A549 (cell line): ENCODE measurements at regions of chr17 and their contacts with region 1.

Region 1: DNA sequence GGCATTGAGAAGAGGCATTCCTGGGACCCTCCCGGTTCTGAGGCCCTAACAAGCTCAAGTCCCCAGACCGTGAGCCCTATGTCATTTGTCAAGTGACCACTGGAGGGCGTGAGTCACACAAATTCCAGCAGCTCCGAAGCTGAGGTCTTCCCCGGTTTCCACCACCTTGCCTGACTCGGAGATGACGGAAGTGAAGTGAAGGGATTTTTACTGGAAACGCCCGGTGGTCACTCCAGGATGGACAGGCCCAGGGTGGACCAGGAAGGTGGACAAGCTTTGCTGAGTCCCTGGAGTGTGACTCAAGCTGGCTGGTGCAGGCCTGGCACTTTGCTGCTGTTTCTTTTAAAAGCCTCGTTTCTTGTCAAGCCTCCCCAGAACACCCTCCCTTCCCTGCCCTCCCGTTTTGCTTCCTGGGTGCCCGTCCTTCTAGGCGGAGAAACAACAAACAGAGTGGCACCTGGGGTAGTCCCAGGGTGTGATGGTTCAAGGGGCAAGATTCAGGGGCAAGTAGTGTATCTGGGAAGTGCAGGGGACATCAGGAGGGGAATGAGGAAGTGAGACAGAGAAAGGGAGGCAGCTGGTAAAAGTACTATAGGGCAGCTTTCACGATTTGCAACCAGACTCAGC is 5.3 kb upstream of the NOS2 start:
- DNase-seq: peak; percentile 92 to 93
- ATAC-seq: peak; percentile 95 to 99
- H3K4me3 ChIP-seq: peak overlapping the region; percentile 28
- H3K27ac ChIP-seq: peak overlapping the region; percentile 73 to 86
- H3K4me1 ChIP-seq: peaks cover 3% of the 10 kb centered on the region; the same call in 1 of the 3 replicates
- CTCF ChIP-seq: peak; percentile 86
- EP300 ChIP-seq: no peak
- POLR2A ChIP-seq: no peak
- RAD21 ChIP-seq: peak; percentile 80 to 84

Region 2: GRCh38 chr17:27778193-27778592 is 27.4 kb before region 1 on chr17:
- CTCF ChIA-PET with region 1: interaction called, 24 read pairs
- POLR2A ChIA-PET with region 1: no interaction called
- DNase-seq: no peak
- ATAC-seq: no peak; a peak in 1 of 6 replicates
- H3K4me3 ChIP-seq: no peak overlapping the region
- H3K27ac ChIP-seq: peak overlapping the region; percentile 48 to 59
- H3K4me1 ChIP-seq: peaks cover 12% of the 10 kb centered on the region
- CTCF ChIP-seq: no peak
- EP300 ChIP-seq: no peak
- POLR2A ChIP-seq: no peak
- RAD21 ChIP-seq: no peak

Region 3: GRCh38 chr17:27793168-27793905 is 12.3 kb before region 1 on chr17:
- CTCF ChIA-PET with region 1: interaction called, 58 read pairs
- POLR2A ChIA-PET with region 1: no interaction called
- DNase-seq: peak in 1 of 2 experiments; percentile 37
- ATAC-seq: peak; percentile 69 to 85
- H3K4me3 ChIP-seq: peak overlapping the region; percentile 53
- H3K27ac ChIP-seq: peak overlapping the region; percentile 32 to 73; a peak in 5 of 6 replicates
- H3K4me1 ChIP-seq: peaks cover 10% of the 10 kb centered on the region; the same call in 2 of the 3 replicates
- CTCF ChIP-seq: no peak
- EP300 ChIP-seq: no peak
- POLR2A ChIP-seq: peak; percentile 31; the same call in 1 of the 2 replicates
- RAD21 ChIP-seq: no peak

Region 4: DNA sequence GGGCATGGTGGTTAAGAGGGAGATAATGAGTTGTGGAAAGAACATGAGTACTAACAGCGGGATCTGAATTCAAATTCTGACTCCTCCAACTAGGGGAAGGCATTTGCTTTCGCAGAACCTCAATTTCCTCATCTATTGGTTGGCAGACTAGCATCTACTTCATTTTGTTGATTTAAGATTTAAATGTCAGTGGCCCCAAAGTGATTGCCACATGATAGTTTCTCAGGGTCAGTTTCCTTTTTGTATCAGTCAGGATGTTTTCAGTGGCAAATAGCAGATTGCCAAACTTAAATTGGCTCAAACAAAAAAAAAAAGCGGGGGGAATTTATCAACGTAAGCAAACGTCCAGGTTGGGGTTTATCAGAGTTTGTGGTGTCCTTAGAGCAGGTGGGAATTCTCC is 19.8 kb after region 1 on chr17:
- CTCF ChIA-PET with region 1: interaction called, 42 read pairs
- POLR2A ChIA-PET with region 1: no interaction called
- DNase-seq: no peak
- ATAC-seq: no peak
- H3K4me3 ChIP-seq: no peak overlapping the region
- H3K27ac ChIP-seq: no peak overlapping the region
- H3K4me1 ChIP-seq: no peaks in the 10 kb centered on the region
- CTCF ChIP-seq: no peak
- EP300 ChIP-seq: no peak
- POLR2A ChIP-seq: no peak
- RAD21 ChIP-seq: no peak

Region 5: GRCh38 chr17:27846042-27846655 is 40.5 kb after region 1 on chr17:
- CTCF ChIA-PET with region 1: interaction called, 18 read pairs
- POLR2A ChIA-PET with region 1: no interaction called
- DNase-seq: no peak
- ATAC-seq: no peak
- H3K4me3 ChIP-seq: no peak overlapping the region
- H3K27ac ChIP-seq: no peak overlapping the region
- H3K4me1 ChIP-seq: no peaks in the 10 kb centered on the region
- CTCF ChIP-seq: no peak
- EP300 ChIP-seq: no peak
- POLR2A ChIP-seq: no peak
- RAD21 ChIP-seq: no peak

Region 6: GRCh38 chr17:27892866-27893769 is 87.5 kb after region 1 on chr17 and contains the start of gene LYRM9:
- CTCF ChIA-PET with region 1: interaction called, 474 read pairs
- POLR2A ChIA-PET with region 1: no interaction called
- DNase-seq: peak; percentile 78 to 90
- ATAC-seq: peak; percentile 95 to 99
- H3K4me3 ChIP-seq: peak within 1 kb of the TSS; percentile 48
- H3K27ac ChIP-seq: peak within 1 kb of the TSS; percentile 78 to 94
- H3K4me1 ChIP-seq: peaks cover 20% of the 10 kb centered on the region; the same call in 1 of the 3 replicates
- CTCF ChIP-seq: peak; percentile 99
- EP300 ChIP-seq: no peak
- POLR2A ChIP-seq: peak; percentile 89
- RAD21 ChIP-seq: peak; percentile 31 to 62; a peak in 3 of 5 replicates
- polyA plus RNA-seq, gene LYRM9: 2.5 and 2.7 TPM in 2 replicates

Region 7: DNA sequence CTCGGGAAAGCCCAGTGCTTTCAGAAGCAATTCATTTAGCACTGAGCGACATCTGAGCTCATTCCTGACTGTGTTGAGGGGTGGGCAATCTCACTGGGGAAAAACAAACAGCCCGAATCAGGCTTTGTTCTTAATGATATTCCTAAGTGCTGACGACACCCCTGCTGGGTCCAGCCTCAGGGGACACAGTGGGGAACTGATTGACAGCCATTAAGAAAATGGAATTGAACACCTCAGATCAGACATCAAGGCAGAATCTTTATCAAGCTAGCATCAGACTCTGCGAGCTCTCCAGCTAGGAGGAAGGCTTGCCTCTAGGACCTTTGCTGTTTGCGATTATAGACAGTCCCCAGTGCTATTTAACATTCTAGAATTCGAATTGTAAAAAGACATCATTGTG is 110.1 kb after region 1 on chr17:
- CTCF ChIA-PET with region 1: no interaction called
- POLR2A ChIA-PET with region 1: no interaction called
- DNase-seq: no peak
- ATAC-seq: no peak
- H3K4me3 ChIP-seq: no peak overlapping the region
- H3K27ac ChIP-seq: no peak overlapping the region
- H3K4me1 ChIP-seq: no peaks in the 10 kb centered on the region
- CTCF ChIP-seq: no peak
- EP300 ChIP-seq: no peak
- POLR2A ChIP-seq: no peak
- RAD21 ChIP-seq: no peak

Region 8: GRCh38 chr17:28033972-28034714 is 228.5 kb after region 1 on chr17:
- CTCF ChIA-PET with region 1: no interaction called
- POLR2A ChIA-PET with region 1: no interaction called
- DNase-seq: peak in 1 of 2 experiments; percentile 22
- ATAC-seq: peak; percentile 52 to 64; a peak in 5 of 6 replicates
- H3K4me3 ChIP-seq: no peak overlapping the region
- H3K27ac ChIP-seq: peak overlapping the region in 1 of 2 experiments; percentile 15; a peak in 2 of 6 replicates
- H3K4me1 ChIP-seq: peaks cover 5% of the 10 kb centered on the region; the same call in 1 of the 3 replicates
- CTCF ChIP-seq: no peak
- EP300 ChIP-seq: no peak
- POLR2A ChIP-seq: no peak
- RAD21 ChIP-seq: no peak